ENCODE measurements at regions of chr1 and their contacts with region 1.

Region 1: DNA sequence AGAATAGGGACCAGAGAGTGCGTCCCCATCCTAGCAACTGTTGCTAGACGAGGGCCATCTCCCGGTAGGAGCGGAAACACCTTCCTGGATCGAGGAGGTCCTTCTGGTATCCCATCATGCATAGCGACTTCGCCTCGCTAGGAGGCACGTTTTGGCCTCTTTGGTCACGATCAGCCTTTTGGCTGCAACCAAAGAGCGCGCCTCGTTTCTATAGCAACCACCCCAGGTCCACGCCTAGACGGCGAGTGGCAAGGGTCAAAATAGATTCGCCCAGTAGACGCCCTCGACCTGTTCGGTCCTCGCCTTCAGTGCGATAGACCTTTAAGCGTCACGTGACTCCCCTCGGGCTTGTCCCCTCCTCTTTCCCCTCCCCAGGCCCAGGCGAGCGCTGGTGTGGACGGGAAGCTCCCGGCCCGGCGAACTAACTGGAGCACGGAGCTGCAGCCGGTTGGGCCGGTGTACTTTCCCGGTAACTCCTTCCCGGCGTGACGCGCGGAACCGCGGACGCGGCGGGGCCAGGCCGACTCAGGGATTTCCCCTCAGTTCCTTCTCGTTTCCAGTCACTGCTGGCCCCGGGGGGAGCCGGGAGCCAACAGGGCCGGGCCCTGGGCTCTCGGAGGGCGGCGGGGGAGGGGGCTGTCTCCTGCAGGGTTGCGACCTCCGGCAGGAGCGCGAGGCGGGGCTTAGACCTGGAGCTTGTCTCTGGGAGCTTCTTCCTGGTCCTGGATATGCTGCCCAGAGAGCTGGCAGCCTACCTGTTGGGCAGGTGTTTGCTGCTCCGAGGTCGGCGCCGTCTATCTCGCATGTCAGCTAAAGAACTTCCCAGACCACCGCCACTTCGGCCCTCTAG is at the start of gene DNAJC16:
- DNase-seq: peak; percentile 99
- ATAC-seq: peak; percentile 35
- H3K4me3 ChIP-seq: peak within 1 kb of the TSS; percentile 81 to 95 (median 86)
- H3K4me3 Mint-ChIP-seq: peak within 1 kb of the TSS; percentile 89
- H3K27ac ChIP-seq: peak within 1 kb of the TSS; percentile 99
- H3K27ac Mint-ChIP-seq: peak within 1 kb of the TSS; percentile 99
- H3K4me1 ChIP-seq: peaks cover 28 to 34% of the 10 kb centered on the region in 2 donors
- H3K4me1 Mint-ChIP-seq: peaks cover 59% of the 10 kb centered on the region
- H3K27me3 ChIP-seq: no peaks in the 10 kb centered on the region
- H3K27me3 Mint-ChIP-seq: no peaks in the 10 kb centered on the region
- CTCF ChIP-seq: no peak
- total RNA-seq, gene DNAJC16: 41.2 and 47.1 TPM in 2 replicates

Region 2: DNA sequence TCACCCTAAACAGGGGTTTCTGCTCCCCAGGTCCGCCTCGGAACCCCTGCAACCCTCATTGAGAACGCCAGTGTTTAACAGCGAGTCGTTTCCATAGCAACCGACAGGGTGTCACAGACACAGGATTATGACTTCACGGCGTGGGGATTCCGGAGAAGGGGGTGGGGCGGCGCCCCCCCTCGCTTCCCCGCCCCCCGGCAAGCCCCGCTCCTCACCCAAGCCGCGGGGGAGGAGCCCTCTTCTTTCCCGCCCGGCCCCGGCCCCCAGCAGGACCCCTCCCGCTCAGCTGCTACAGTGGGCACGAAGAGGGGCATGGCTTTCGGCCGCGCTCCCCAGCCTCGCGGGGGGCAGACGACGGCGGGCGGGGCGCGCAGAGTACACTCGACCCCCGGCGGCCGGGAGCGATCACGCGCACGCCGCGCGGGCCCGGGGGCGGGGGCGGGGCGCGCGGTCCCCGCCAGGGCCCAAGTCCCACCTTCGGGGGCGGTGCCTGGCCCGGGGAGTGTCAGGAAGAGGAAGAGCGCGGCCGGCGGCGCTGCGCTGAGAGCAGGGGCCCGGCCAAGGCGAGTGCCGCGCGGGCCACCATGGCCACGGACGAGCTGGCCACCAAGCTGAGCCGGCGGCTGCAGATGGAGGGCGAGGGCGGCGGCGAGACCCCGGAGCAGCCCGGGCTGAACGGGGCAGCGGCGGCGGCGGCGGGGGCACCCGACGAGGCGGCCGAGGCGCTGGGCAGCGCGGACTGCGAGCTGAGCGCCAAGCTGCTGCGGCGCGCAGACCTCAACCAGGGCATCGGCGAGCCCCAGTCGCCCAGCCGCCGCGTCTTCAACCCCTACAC is 117.1 kb before region 1 on chr1 and contains the start of gene EFHD2:
- CTCF ChIA-PET with region 1: no interaction called
- POLR2A ChIA-PET with region 1: no interaction called
- intact Hi-C with region 1: loop called (anchors 5 kb)
- DNase-seq: peak; percentile 96
- ATAC-seq: peak; percentile 86
- H3K4me3 ChIP-seq: peak within 1 kb of the TSS; percentile 58 to 87 (median 84)
- H3K4me3 Mint-ChIP-seq: peak within 1 kb of the TSS; percentile 94
- H3K27ac ChIP-seq: peak within 1 kb of the TSS; percentile 28 to 86
- H3K27ac Mint-ChIP-seq: peak within 1 kb of the TSS; percentile 89
- H3K4me1 ChIP-seq: peaks cover 23 to 48% of the 10 kb centered on the region in 2 donors
- H3K4me1 Mint-ChIP-seq: peaks cover 43% of the 10 kb centered on the region
- H3K27me3 ChIP-seq: no peaks in the 10 kb centered on the region
- H3K27me3 Mint-ChIP-seq: peaks cover 3% of the 10 kb centered on the region
- CTCF ChIP-seq: no peak
- total RNA-seq, gene EFHD2: 38.4 and 39.3 TPM in 2 replicates

Region 3: GRCh38 chr1:15543589-15544568 is 17.2 kb after region 1 on chr1:
- CTCF ChIA-PET with region 1: no interaction called
- POLR2A ChIA-PET with region 1: no interaction called
- intact Hi-C with region 1: no loop called
- DNase-seq: no peak
- ATAC-seq: no peak
- H3K4me3 ChIP-seq: no peak overlapping the region
- H3K4me3 Mint-ChIP-seq: no peak overlapping the region
- H3K27ac ChIP-seq: no peak overlapping the region
- H3K27ac Mint-ChIP-seq: no peak overlapping the region
- H3K4me1 ChIP-seq: no peaks in the 10 kb centered on the region
- H3K4me1 Mint-ChIP-seq: no peaks in the 10 kb centered on the region
- H3K27me3 ChIP-seq: no peaks in the 10 kb centered on the region
- H3K27me3 Mint-ChIP-seq: no peaks in the 10 kb centered on the region
- CTCF ChIP-seq: no peak

Region 4: GRCh38 chr1:15603050-15603965 is 76.6 kb after region 1 on chr1:
- CTCF ChIA-PET with region 1: no interaction called
- POLR2A ChIA-PET with region 1: interaction called, 3 read pairs
- intact Hi-C with region 1: loop called (anchors 1 kb)
- DNase-seq: peak; percentile 96
- ATAC-seq: peak; percentile 97
- H3K4me3 ChIP-seq: peak overlapping the region; percentile 59 to 95 (median 72)
- H3K4me3 Mint-ChIP-seq: peak overlapping the region; percentile 86
- H3K27ac ChIP-seq: peak overlapping the region; percentile 34 to 80
- H3K27ac Mint-ChIP-seq: peak overlapping the region; percentile 79
- H3K4me1 ChIP-seq: peaks cover 5 to 11% of the 10 kb centered on the region in 2 donors
- H3K4me1 Mint-ChIP-seq: peaks cover 11% of the 10 kb centered on the region
- H3K27me3 ChIP-seq: no peaks in the 10 kb centered on the region
- H3K27me3 Mint-ChIP-seq: no peaks in the 10 kb centered on the region
- CTCF ChIP-seq: no peak

Region 5: GRCh38 chr1:15684468-15685291 is 158.0 kb after region 1 on chr1:
- CTCF ChIA-PET with region 1: no interaction called
- POLR2A ChIA-PET with region 1: no interaction called
- intact Hi-C with region 1: loop called (anchors 5 kb)
- DNase-seq: peak; percentile 75
- ATAC-seq: peak; percentile 8
- H3K4me3 ChIP-seq: peak overlapping the region; percentile 69 to 89 (median 82)
- H3K4me3 Mint-ChIP-seq: peak overlapping the region; percentile 91
- H3K27ac ChIP-seq: peak overlapping the region; percentile 83 to 84
- H3K27ac Mint-ChIP-seq: peak overlapping the region; percentile 92
- H3K4me1 ChIP-seq: peaks cover 37 to 50% of the 10 kb centered on the region in 2 donors
- H3K4me1 Mint-ChIP-seq: peaks cover 61% of the 10 kb centered on the region
- H3K27me3 ChIP-seq: no peaks in the 10 kb centered on the region
- H3K27me3 Mint-ChIP-seq: no peaks in the 10 kb centered on the region
- CTCF ChIP-seq: no peak

Region 6: DNA sequence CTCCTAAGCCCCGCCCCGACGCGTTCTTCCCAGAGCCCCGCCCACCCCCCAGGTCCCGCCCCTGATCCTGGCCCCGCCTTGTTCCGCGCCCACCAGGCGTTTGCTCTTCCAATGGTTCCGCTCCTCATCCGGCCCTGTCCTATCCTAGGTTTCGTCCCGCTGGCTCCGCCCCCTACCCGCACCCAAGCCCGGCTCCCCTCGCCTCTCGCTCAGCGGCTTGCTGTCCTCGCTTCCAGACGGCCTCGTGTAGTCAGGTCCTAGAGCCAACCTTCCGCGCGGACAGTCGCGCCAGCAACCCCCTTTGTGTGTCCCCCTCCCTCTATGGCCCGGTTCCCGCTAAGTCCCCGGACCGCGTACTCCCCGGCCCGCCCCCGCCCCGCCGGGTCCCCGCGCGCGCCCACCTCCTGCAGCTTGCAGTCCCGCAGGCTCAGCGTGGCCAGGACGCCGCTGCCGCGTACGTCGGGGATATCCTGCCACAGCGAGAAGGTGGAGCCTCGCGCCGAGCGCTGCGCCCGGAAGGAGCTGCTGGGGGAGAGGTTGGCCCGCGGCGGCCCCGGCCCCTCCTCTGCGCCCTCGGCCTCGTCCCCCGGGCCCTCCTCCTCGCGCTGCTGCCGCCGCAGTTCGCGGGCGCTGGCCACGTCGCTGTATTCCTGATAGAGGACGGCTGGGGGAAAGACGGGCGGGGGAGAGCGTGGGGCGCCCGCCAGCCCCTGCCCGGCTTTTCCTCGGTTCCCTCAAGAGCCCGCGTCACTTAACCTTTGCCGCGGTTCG is 680.0 kb after region 1 on chr1:
- CTCF ChIA-PET with region 1: interaction called, 3 read pairs
- POLR2A ChIA-PET with region 1: no interaction called
- intact Hi-C with region 1: loop called (anchors 2 kb)
- DNase-seq: peak; percentile 93
- ATAC-seq: peak; percentile 87
- H3K4me3 ChIP-seq: peak overlapping the region; percentile 11 to 96 (median 72)
- H3K4me3 Mint-ChIP-seq: peak overlapping the region; percentile 97
- H3K27ac ChIP-seq: peak overlapping the region; percentile 61 to 79
- H3K27ac Mint-ChIP-seq: peak overlapping the region; percentile 93
- H3K4me1 ChIP-seq: peaks cover 12 to 17% of the 10 kb centered on the region in 2 donors
- H3K4me1 Mint-ChIP-seq: peaks cover 10% of the 10 kb centered on the region
- H3K27me3 ChIP-seq: no peaks in the 10 kb centered on the region
- H3K27me3 Mint-ChIP-seq: peaks cover under 1% of the 10 kb centered on the region
- CTCF ChIP-seq: no peak

Region 7: DNA sequence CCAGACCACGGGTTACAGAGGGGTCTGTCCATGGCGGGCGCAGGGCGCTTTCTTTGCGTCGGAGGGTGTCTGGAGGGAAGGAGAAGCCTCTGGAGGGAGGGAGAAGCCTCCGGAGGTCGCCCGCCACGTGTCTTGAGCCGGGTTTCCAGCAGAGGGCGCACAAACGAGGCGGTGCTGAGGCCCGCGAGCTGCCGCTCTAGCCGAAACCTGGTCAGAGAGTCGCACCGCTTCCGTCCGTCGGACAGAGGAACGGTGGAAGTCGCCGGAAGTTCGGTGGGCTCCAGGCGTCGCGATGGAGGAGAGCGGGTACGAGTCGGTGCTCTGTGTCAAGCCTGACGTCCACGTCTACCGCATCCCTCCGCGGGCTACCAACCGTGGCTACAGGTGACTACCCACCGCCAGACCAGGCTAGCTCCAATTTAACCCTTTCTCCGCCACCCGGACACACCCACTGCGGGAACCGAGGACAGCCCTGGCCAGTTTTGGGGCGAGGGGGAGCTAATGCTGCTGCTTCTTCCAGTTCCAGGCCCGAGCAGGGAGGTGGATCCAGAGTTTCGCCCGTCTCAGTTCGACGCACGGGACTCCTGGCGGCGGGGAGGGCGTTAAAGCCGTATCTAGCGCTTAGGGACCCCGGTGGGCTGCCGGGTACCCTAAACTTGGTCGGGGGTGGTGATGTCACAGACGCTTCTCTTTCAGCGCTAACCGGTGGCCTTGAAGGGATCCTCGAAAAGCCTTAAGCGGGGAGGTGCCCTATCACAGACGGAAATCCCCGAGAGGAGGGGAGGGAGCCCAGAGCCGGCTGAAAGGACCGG is 914.0 kb after region 1 on chr1 and contains the start of gene NECAP2:
- CTCF ChIA-PET with region 1: no interaction called
- POLR2A ChIA-PET with region 1: no interaction called
- intact Hi-C with region 1: loop called (anchors 10 kb)
- DNase-seq: peak; percentile 94
- ATAC-seq: peak; percentile 89
- H3K4me3 ChIP-seq: peak within 1 kb of the TSS; percentile 34 to 100 (median 95)
- H3K4me3 Mint-ChIP-seq: peak within 1 kb of the TSS; percentile 93
- H3K27ac ChIP-seq: peak within 1 kb of the TSS; percentile 97 to 98
- H3K27ac Mint-ChIP-seq: peak within 1 kb of the TSS; percentile 91
- H3K4me1 ChIP-seq: peaks cover 16 to 29% of the 10 kb centered on the region in 2 donors
- H3K4me1 Mint-ChIP-seq: peaks cover 28% of the 10 kb centered on the region
- H3K27me3 ChIP-seq: no peaks in the 10 kb centered on the region
- H3K27me3 Mint-ChIP-seq: no peaks in the 10 kb centered on the region
- CTCF ChIP-seq: peak; percentile 92
- total RNA-seq, gene NECAP2: 77.3 and 78.5 TPM in 2 replicates